Naive thymus-derived CD8-positive, alpha-beta T cell (primary cell): ENCODE measurements at regions of chr1 and their contacts with region 1.

Region 1: GRCh38 chr1:23344111-23344986 is at the start of gene HNRNPR:
- DNase-seq: peak; percentile 94 to 100 (median 98)
- ATAC-seq: peak; percentile 97 to 98
- H3K4me3 Mint-ChIP-seq: peak within 1 kb of the TSS; percentile 89 to 99 (median 98)
- H3K27ac Mint-ChIP-seq: peak within 1 kb of the TSS; percentile 88 to 99 (median 96)
- H3K4me1 Mint-ChIP-seq: peaks cover 21 to 50% (median 46%) of the 10 kb centered on the region in 4 donors
- H3K27me3 Mint-ChIP-seq: no peaks in the 10 kb centered on the region
- polyA plus RNA-seq, gene HNRNPR: 182 to 193 (median 184) TPM

Region 2: DNA sequence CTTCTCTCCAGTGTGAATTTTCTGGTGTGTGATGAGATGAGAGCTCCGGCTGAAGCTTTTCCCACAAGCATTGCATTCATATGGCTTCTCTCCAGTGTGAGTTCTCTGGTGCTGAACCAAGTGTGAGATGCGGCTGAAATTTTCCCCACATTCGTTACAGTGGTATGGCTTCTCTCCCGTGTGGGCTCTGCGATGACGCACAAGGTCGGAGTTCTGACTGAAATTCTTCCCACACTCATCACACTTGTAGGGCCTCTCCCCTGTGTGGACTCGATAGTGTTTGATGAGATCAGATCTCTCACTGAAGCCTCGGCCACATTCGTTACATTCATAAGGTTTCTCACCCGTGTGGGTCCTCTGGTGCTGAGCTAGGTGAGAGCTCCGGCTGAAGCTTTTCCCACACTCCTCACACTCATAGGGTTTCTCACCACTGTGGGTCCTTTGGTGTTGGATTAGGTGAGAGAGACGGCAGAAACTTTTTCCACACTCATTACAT is 17.9 kb after region 1 on chr1:
- POLR2A ChIA-PET with region 1: interaction called, 86 read pairs
- DNase-seq: no peak
- ATAC-seq: no peak
- H3K4me3 Mint-ChIP-seq: no peak overlapping the region
- H3K27ac Mint-ChIP-seq: peak overlapping the region in 2 of 10 donors; percentile 8 to 40
- H3K4me1 Mint-ChIP-seq: peaks cover 8 to 17% (median 13%) of the 10 kb centered on the region in 4 donors
- H3K27me3 Mint-ChIP-seq: no peaks in the 10 kb centered on the region

Region 3: GRCh38 chr1:23367791-23368561 is 23.6 kb after region 1 on chr1:
- POLR2A ChIA-PET with region 1: interaction called, 86 read pairs
- DNase-seq: peak; percentile 91 to 99 (median 98)
- ATAC-seq: peak; percentile 87 to 91
- H3K4me3 Mint-ChIP-seq: peak overlapping the region; percentile 97 to 100 (median 99)
- H3K27ac Mint-ChIP-seq: peak overlapping the region; percentile 82 to 99 (median 98)
- H3K4me1 Mint-ChIP-seq: peaks cover 23 to 46% (median 40%) of the 10 kb centered on the region in 4 donors
- H3K27me3 Mint-ChIP-seq: no peaks in the 10 kb centered on the region

Region 4: DNA sequence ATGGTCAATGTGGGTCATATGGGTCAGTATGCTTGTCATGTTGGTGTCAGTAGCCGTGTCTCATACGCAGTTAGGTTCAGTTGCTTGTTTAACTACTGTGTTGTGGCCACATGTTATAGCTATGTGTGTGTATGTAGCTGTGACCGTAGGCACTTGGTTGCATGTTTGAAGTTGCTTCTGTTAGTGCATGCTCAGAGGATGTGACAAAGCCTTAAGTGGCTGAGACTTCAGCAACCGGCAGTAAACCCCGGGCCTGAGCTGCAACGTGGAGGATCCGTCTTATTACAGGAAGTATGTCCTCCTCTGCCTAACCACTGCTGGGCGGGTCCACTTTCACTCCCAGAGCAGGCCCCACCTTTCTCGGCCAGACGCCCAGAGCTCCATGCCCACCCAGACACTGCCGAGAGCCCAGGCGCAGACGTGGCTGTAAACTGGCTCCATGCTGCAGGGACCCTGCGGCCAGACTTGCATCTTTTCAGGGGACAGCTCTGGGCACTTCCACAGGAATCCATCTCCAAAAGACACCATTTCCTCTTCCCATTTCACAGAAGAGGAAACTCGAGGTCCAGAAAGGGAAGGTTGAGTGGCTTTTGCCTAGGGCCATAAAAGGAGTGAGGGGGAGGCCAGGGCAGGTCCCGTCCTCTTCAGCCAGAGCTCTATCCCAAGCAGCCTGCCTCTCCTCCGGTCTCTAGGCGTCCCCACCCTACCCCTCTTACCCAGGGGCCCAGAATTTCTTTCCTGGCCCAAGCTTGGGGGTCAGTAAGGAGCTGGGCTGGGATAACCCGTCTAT is 78.1 kb after region 1 on chr1:
- POLR2A ChIA-PET with region 1: interaction called, 19 read pairs
- DNase-seq: peak; percentile 35 to 86 (median 52)
- ATAC-seq: peak; percentile 72 to 83
- H3K4me3 Mint-ChIP-seq: peak overlapping the region; percentile 83 to 98 (median 92)
- H3K27ac Mint-ChIP-seq: peak overlapping the region; percentile 60 to 95 (median 90)
- H3K4me1 Mint-ChIP-seq: peaks cover 25 to 42% (median 34%) of the 10 kb centered on the region in 4 donors
- H3K27me3 Mint-ChIP-seq: peaks cover 0 to 12% (median 0%) of the 10 kb centered on the region in 5 donors

Region 5: GRCh38 chr1:23452011-23452411 is 107.7 kb after region 1 on chr1:
- POLR2A ChIA-PET with region 1: no interaction called
- DNase-seq: peak in 9 of 10 donors; percentile 7 to 71 (median 44)
- ATAC-seq: peak; percentile 85 to 97
- H3K4me3 Mint-ChIP-seq: peak overlapping the region in 3 of 10 donors; percentile 19 to 43 (median 31)
- H3K27ac Mint-ChIP-seq: peak overlapping the region in 5 of 10 donors; percentile 9 to 80 (median 51)
- H3K4me1 Mint-ChIP-seq: peaks cover 18 to 28% (median 21%) of the 10 kb centered on the region in 4 donors
- H3K27me3 Mint-ChIP-seq: peaks cover 4 to 15% (median 8%) of the 10 kb centered on the region in 5 donors